PC-3 (cell line): ENCODE measurements at regions of chr18 and their contacts with region 1.

Region 1: GRCh38 chr18:45974088-45974536 is 7.0 kb upstream of the EPG5 start:
- DNase-seq: peak; percentile 72
- ATAC-seq: peak; percentile 65
- H3K4me3 ChIP-seq: no peak overlapping the region
- H3K27ac ChIP-seq: no peak overlapping the region
- H3K4me1 ChIP-seq: no peaks in the 10 kb centered on the region
- H3K27me3 ChIP-seq: no peaks in the 10 kb centered on the region
- CTCF ChIP-seq: peak; percentile 71

Region 2: DNA sequence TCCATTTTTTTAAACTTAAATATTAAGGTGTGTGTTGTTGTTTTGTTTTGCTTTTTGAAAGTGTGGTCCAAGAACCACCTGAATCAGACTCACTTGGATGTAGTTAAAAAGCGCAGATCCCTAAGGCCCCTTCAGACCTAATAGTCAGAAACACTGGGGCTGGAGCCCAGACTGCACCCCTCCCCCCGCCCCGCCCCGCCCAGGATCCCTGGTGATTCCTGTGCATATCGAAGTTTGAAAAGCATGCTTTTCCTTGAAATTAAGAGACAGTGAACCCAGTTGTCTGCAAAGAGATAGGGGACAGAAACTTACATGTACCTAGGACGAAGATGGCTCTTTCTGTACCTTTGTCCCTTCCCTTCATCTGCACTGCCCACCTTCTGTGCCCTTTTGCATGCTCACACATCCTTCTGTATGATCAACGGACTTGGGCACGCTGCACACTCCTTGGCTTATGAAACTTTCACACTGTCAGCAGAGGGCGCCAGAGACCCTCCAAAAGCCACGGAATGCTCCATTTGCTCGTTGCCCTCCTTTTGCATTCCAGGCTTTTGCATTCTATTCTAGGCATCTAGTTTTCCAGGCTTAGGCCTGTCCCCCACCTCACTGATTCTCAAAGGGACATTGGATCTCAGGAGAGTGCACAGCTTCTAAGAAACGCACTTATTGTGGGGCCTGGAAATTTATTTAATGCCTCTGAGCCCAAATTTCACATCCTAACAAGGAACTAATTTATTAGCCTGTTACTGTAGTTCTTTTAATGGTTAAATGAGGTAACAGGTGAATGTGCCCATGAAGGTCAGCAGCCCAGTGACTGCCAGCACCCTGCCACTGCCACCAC is 282.9 kb before region 1 on chr18:
- CTCF ChIA-PET with region 1: no interaction called
- POLR2A ChIA-PET with region 1: no interaction called
- intact Hi-C with region 1: loop called (anchors 1 kb)
- DNase-seq: peak; percentile 78
- ATAC-seq: peak; percentile 98
- H3K4me3 ChIP-seq: no peak overlapping the region
- H3K27ac ChIP-seq: no peak overlapping the region
- H3K4me1 ChIP-seq: peaks cover 5% of the 10 kb centered on the region; the same call in 1 of the 2 replicates
- H3K27me3 ChIP-seq: no peaks in the 10 kb centered on the region
- CTCF ChIP-seq: peak; percentile 71

Region 3: GRCh38 chr18:45920367-45920766 is 53.7 kb before region 1 on chr18:
- CTCF ChIA-PET with region 1: no interaction called
- POLR2A ChIA-PET with region 1: no interaction called
- intact Hi-C with region 1: loop called (anchors 1 kb)
- DNase-seq: peak; percentile 60
- ATAC-seq: peak; percentile 81
- H3K4me3 ChIP-seq: no peak overlapping the region
- H3K27ac ChIP-seq: no peak overlapping the region
- H3K4me1 ChIP-seq: peaks cover 11% of the 10 kb centered on the region; the same call in 1 of the 2 replicates
- H3K27me3 ChIP-seq: no peaks in the 10 kb centered on the region
- CTCF ChIP-seq: no peak

Region 4: GRCh38 chr18:46073474-46074331 is 99.6 kb after region 1 on chr18:
- CTCF ChIA-PET with region 1: interaction called, 6 read pairs
- POLR2A ChIA-PET with region 1: no interaction called
- intact Hi-C with region 1: loop called (anchors 1 kb)
- DNase-seq: peak; percentile 85
- ATAC-seq: peak; percentile 68
- H3K4me3 ChIP-seq: no peak overlapping the region
- H3K27ac ChIP-seq: 0 out of 2 replicates have a peak overlapping the region, but pooled peaks have one; percentile 7
- H3K4me1 ChIP-seq: no peaks in the 10 kb centered on the region
- H3K27me3 ChIP-seq: no peaks in the 10 kb centered on the region
- CTCF ChIP-seq: peak; percentile 52